ENCODE measurements at regions of chr12 and their contacts with region 1.

Region 1: GRCh38 chr12:122935318-122935717 is 30.9 kb downstream of the ABCB9 start:
- DNase-seq: no peak
- ATAC-seq: no peak
- H3K4me3 ChIP-seq: no peak overlapping the region
- H3K4me3 Mint-ChIP-seq: no peak overlapping the region
- H3K27ac ChIP-seq: no peak overlapping the region
- H3K27ac Mint-ChIP-seq: no peak overlapping the region
- H3K4me1 ChIP-seq: peaks cover 3% of the 10 kb centered on the region
- H3K4me1 Mint-ChIP-seq: peaks cover 0 to 5% of the 10 kb centered on the region in 2 donors
- H3K27me3 ChIP-seq: no peaks in the 10 kb centered on the region
- H3K27me3 Mint-ChIP-seq: no peaks in the 10 kb centered on the region
- CTCF ChIP-seq: no peak

Region 2: GRCh38 chr12:122917504-122918121 is 17.7 kb before region 1 on chr12:
- intact Hi-C with region 1: loop called (anchors 2 kb)
- DNase-seq: no peak
- ATAC-seq: no peak
- H3K4me3 ChIP-seq: no peak overlapping the region
- H3K4me3 Mint-ChIP-seq: no peak overlapping the region
- H3K27ac ChIP-seq: no peak overlapping the region
- H3K27ac Mint-ChIP-seq: no peak overlapping the region
- H3K4me1 ChIP-seq: no peaks in the 10 kb centered on the region
- H3K4me1 Mint-ChIP-seq: no peaks in the 10 kb centered on the region
- H3K27me3 ChIP-seq: no peaks in the 10 kb centered on the region
- H3K27me3 Mint-ChIP-seq: no peaks in the 10 kb centered on the region
- CTCF ChIP-seq: no peak

Region 3: DNA sequence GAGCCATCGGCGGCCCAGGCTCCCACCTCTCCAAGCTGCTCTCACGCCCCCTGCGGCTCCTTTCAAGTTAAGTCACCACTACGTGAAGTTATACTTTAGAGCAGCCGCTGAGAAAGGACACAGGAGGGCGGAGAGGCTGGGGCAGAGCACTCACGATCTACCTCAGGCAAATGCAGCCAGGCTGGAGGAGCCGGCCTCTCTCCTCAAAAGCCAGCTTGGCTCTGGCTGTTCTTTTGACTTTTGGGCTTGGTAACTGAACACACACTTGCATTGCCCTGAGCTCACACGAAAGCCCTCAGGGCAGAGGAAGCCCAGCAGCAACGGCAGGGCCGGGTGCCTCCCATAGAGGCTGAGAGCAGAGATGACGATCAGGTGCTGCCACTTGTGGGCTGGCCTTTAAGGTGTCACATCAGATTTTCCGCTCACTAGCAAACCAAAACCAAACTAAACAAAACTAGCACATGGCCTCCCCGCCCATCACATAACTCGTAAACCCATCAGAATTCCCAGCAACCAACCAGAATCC is 140.4 kb after region 1 on chr12:
- intact Hi-C with region 1: no loop called
- DNase-seq: peak; percentile 73 to 84
- ATAC-seq: peak; percentile 78 to 86 (median 83)
- H3K4me3 ChIP-seq: peak overlapping the region; percentile 58
- H3K4me3 Mint-ChIP-seq: peak overlapping the region; percentile 96
- H3K27ac ChIP-seq: peak overlapping the region; percentile 94
- H3K27ac Mint-ChIP-seq: peak overlapping the region; percentile 97 to 98
- H3K4me1 ChIP-seq: peaks cover 73% of the 10 kb centered on the region
- H3K4me1 Mint-ChIP-seq: peaks cover 67 to 85% of the 10 kb centered on the region in 2 donors
- H3K27me3 ChIP-seq: no peaks in the 10 kb centered on the region
- H3K27me3 Mint-ChIP-seq: no peaks in the 10 kb centered on the region
- CTCF ChIP-seq: peak; percentile 32

Measured in natural killer cell (primary cell).